CD4-positive, alpha-beta T cell (primary cell): ENCODE measurements at regions of chr4 and their contacts with region 1.

Region 1: GRCh38 chr4:142416711-142417275 is 429.3 kb downstream of the INPP4B start:
- DNase-seq: peak in 5 of 14 experiments; percentile 19 to 75 (median 57)
- ATAC-seq: peak; percentile 92
- H3K4me3 ChIP-seq: peak overlapping the region; percentile 36
- H3K4me3 Mint-ChIP-seq: peak overlapping the region; percentile 86
- H3K27ac ChIP-seq: peak overlapping the region; percentile 51 to 78
- H3K27ac Mint-ChIP-seq: peak overlapping the region; percentile 93
- H3K4me1 ChIP-seq: peaks cover 12% of the 10 kb centered on the region
- H3K4me1 Mint-ChIP-seq: peaks cover 47% of the 10 kb centered on the region
- H3K27me3 ChIP-seq: no peaks in the 10 kb centered on the region
- H3K27me3 Mint-ChIP-seq: no peaks in the 10 kb centered on the region
- CTCF ChIP-seq: no peak

Region 2: DNA sequence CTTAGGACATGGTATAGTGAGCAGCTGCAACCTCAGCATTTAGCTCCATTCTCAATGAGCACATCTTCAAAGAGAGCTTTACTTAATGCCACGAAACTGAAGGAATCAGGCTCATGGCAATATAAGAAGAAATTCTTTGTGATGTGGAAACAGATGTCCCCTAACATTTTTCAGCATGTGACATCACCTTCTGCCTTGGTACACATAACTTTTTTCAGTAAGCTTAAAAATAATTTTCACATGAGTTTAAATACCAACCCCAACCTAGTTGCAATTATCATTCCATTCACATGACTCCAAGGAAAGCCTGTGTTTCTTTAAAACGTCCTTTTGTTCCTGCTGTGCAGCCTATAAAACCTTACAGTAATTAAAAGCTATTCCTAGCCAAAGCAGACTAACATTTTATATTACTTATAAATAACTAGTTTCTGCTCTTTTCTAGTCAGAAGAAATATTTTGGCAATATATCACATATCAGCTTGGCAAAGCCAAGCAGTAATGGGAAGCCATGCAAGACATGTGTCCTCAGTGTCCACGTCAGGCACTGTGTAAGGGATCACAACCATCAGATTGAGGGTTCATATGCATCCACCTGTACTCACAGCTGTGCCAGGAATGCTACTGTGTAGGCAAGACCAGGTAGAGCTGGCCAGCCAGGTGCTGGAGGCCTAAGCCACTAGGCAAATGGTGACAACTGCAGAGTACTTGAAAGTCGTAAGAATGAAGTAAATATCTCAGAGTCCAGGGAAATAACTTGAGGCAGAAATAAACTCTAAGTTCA is 37.3 kb before region 1 on chr4:
- CTCF ChIA-PET with region 1: interaction called, 3 read pairs
- POLR2A ChIA-PET with region 1: interaction called, 11 read pairs
- intact Hi-C with region 1: no loop called
- DNase-seq: no peak
- ATAC-seq: no peak
- H3K4me3 ChIP-seq: no peak overlapping the region
- H3K4me3 Mint-ChIP-seq: peak overlapping the region; percentile 23
- H3K27ac ChIP-seq: no peak overlapping the region
- H3K27ac Mint-ChIP-seq: peak overlapping the region; percentile 84
- H3K4me1 ChIP-seq: peaks cover 21% of the 10 kb centered on the region
- H3K4me1 Mint-ChIP-seq: peaks cover 90% of the 10 kb centered on the region
- H3K27me3 ChIP-seq: no peaks in the 10 kb centered on the region
- H3K27me3 Mint-ChIP-seq: no peaks in the 10 kb centered on the region
- CTCF ChIP-seq: no peak

Region 3: DNA sequence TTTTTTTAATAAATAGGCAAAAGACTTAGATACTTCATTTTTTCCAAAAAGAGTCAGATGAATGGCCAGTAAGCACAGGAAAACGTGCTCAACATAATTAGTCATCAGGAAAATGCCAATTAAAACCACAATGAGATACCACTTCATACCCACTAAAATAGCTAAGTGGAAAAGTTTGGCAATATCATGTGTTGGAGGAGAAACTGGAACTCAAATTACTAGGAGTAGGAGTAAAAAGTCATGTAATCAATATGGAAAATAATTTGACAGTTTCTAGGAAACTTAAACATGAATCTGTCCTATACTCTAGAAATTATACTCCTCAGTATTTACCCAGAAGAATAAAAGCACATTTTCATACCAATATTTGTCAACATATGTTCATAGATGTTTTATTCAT is 20.5 kb before region 1 on chr4:
- CTCF ChIA-PET with region 1: no interaction called
- POLR2A ChIA-PET with region 1: interaction called, 9 read pairs
- intact Hi-C with region 1: loop called in 1 of 2 experiments (anchors 2 kb)
- DNase-seq: no peak
- ATAC-seq: no peak
- H3K4me3 ChIP-seq: peak overlapping the region; percentile 36
- H3K4me3 Mint-ChIP-seq: peak overlapping the region; percentile 64
- H3K27ac ChIP-seq: no peak overlapping the region
- H3K27ac Mint-ChIP-seq: peak overlapping the region; percentile 93
- H3K4me1 ChIP-seq: peaks cover 33% of the 10 kb centered on the region
- H3K4me1 Mint-ChIP-seq: peaks cover 92% of the 10 kb centered on the region
- H3K27me3 ChIP-seq: no peaks in the 10 kb centered on the region
- H3K27me3 Mint-ChIP-seq: no peaks in the 10 kb centered on the region
- CTCF ChIP-seq: no peak